Dorsolateral prefrontal cortex (tissue), 120 donors: ENCODE measurements at regions of chr16 and their contacts with region 1.

Region 1: GRCh38 chr16:29815793-29816693 is at the start of gene PAGR1:
- DNase-seq: peak; percentile 96 to 99 (median 98)
- H3K4me3 ChIP-seq: peak within 1 kb of the TSS; percentile 64 to 97 (median 84)
- H3K27ac ChIP-seq: peak within 1 kb of the TSS; percentile 79 to 99 (median 97)
- H3K27me3 ChIP-seq: no peaks in the 10 kb centered on the region
- CTCF ChIP-seq: peak; percentile 63 to 98 (median 88)
- total RNA-seq, gene PAGR1: 16.6 to 44.6 (median 24.7) TPM

Region 2: DNA sequence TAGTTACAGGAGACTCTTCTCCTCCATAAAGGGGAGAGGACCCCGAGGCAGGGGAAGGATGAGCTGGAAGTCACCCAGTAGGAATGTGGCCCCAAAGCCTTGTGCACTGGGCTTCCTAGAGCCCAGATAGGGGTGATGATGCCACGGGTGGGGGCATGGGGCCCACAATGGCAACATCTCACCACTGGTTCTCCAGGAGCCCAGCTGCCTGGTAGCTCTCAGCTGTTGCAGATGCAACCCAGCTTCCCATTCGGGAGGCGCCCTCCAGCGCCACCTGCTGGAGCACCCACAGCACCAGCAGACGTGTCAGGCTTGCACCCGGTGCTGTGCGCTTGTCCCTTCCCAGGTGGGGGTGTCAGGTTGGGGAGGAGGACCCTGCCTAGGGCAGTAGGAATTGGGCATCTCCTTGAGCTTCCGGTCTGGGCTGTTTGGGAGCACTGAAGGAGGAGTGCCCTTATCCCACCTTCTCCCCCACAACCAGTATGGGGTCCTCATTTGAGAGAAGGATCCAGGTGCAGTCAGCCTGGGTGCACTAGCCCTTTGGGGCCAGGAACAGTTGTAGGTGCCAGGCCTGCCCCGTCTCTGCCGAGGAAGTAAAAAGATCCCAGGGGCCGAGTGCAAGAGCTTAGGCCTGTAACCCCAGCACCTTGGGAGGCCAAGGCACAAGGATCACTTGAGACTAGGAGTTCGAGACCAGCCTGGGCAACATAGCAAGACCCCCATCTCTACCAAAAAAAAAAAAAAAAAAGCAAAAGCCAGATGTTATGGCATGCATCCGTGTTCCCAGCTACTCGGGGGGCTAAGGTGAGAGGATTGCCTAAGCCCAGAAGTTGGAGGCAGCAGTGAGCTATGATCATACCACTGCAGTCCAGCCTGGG is 32.6 kb after region 1 on chr16:
- intact Hi-C with region 1: no loop called
- DNase-seq: peak; percentile 56 to 84 (median 74)
- H3K4me3 ChIP-seq: no peak overlapping the region
- H3K27ac ChIP-seq: peak overlapping the region in 46 of 59 donors; percentile 1 to 78 (median 52)
- H3K27me3 ChIP-seq: no peaks in the 10 kb centered on the region
- CTCF ChIP-seq: peak; percentile 37 to 96 (median 85)

Region 3: DNA sequence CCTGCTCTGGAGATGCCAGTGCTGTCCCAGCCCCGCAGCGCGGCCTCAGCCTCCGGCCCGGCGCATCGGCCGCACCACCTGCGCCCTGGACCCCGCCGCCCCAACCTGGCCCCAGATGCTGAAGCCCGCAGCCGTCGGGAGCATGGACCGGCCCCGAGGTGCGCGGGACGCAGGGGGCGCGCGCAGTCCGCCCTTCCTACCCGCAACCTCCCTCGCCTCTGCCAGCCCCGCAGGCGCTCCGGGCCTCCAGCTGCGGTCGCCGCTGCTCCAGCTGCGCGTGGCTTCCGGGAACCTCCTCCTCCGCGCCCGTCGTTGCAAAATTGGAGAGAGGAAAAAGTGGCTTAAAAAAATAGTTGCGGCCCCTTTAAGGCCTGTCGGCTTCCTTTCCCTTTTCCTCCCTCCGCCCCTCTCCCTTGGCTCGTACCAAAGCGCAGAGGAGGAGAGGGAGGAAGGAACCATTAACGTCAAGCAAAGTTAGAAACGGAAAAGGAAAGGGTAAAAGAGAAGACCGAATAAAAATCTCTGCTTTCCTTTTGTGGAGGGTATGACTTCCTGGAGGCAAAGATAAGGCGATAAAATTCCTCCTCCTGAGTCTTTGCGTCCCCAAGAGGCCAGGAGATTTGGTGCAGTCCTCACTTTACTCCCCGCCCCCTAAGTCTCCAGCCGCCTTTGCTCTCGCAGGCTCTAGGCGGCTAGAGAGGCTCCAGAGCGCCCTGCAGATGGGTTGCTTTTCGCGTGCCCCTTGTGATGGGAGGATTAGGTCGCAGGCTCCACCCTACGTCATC is 47.0 kb after region 1 on chr16 and contains the start of gene CDIPT:
- intact Hi-C with region 1: loop called (anchors 2 to 5 kb)
- DNase-seq: peak; percentile 83 to 97 (median 96)
- H3K4me3 ChIP-seq: peak within 1 kb of the TSS; percentile 64 to 100 (median 95)
- H3K27ac ChIP-seq: peak within 1 kb of the TSS; percentile 89 to 99 (median 97)
- H3K27me3 ChIP-seq: no peaks in the 10 kb centered on the region
- CTCF ChIP-seq: peak in 54 of 56 donors; percentile 29 to 84 (median 70)
- total RNA-seq, gene CDIPT: 63.9 to 118 (median 94.7) TPM